ENCODE measurements at regions of chr10 and their contacts with region 1.

Region 1: DNA sequence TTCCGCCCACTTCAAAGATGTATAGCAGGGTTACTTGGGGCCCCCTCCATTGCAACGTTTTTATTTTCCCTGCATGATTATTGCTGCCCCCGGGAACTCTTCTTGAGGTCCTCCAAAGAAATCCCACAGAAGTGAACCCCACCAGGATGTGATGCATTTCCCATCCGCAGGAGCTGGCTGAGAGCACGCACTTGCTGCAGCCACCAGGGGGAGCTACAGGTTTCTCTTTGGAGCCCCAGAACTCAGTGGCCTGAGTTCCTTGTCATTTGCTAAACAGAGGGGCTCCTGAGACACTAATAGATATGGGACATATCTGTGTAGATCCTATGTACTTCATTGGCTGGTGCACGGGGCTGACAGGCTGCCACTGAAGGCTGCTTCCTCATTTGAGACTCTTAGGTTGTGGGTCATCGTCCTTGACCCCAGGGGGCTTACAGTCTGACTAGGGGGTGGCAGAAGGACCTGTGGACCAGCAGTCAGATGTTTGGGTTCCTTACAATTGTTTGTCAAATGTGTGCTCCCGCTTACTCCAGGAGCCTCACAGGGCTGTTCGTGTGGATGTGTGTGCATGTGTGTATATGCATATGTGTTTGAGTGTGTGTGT is 52.3 kb upstream of the ENO4 start:
- DNase-seq: peak in 2 of 3 donors; percentile 77 to 82
- ATAC-seq: peak; percentile 84
- H3K4me3 ChIP-seq: no peak overlapping the region
- H3K4me1 ChIP-seq: no peaks in the 10 kb centered on the region
- CTCF ChIP-seq: peak; percentile 84

Region 2: GRCh38 chr10:117174439-117175214 is 377.6 kb after region 1 on chr10:
- intact Hi-C with region 1: loop called (anchors 2 kb)
- DNase-seq: peak; percentile 73 to 95 (median 87)
- ATAC-seq: peak; percentile 97
- H3K4me3 ChIP-seq: no peak overlapping the region
- H3K4me1 ChIP-seq: peaks cover 11% of the 10 kb centered on the region
- CTCF ChIP-seq: peak; percentile 73

Measured in mucosa of descending colon (tissue), 3 donors.